CD4-positive, alpha-beta T cell (primary cell): ENCODE measurements at regions of chr3 and their contacts with region 1.

Region 1: DNA sequence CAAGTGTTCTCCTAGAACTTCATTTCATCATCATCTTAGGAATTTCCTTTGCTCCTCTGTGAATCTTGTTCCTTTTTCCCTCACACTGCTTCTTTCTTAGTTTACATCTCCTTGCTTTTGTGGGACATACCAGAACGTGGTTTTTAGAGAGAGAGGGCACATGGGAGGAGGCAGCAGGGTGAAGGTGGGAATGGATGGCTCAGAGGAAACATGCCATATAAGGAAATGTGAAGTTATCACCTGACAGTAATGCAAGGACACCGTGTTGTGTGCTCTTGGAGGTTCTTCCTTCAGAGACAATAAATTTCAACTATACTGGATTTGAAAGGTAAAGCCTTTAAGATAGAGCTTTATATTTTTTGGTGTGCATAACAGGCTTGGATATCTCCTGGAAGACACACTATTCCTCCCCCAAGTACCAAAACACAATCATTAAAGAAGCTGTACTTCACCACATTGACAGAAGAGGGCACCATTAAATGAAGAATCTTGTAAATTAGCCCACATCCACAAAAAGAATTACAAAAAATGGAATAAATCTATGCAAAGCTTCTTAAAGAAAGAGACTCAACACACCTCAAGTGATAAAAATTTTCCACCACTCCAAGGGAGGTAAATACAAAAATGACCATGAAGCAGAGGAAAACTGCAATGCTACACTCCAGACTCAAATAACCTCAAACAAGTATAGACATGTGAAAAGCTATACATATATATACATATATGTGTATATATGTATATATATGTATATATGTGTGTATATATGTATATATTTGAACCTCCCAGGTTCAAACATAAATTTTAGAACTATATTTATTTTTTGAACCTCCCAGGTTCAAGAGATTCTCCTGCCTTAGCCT is 26.1 kb downstream of the RPL39L start:
- DNase-seq: peak in 3 of 14 experiments; percentile 58 to 72 (median 68)
- ATAC-seq: peak; percentile 63
- H3K4me3 ChIP-seq: no peak overlapping the region
- H3K4me3 Mint-ChIP-seq: no peak overlapping the region
- H3K27ac ChIP-seq: no peak overlapping the region
- H3K27ac Mint-ChIP-seq: no peak overlapping the region
- H3K4me1 ChIP-seq: peaks cover 2% of the 10 kb centered on the region
- H3K4me1 Mint-ChIP-seq: peaks cover 8% of the 10 kb centered on the region
- H3K27me3 ChIP-seq: no peaks in the 10 kb centered on the region
- H3K27me3 Mint-ChIP-seq: no peaks in the 10 kb centered on the region
- CTCF ChIP-seq: peak; percentile 86

Region 2: GRCh38 chr3:187150599-187150998 is 37.4 kb after region 1 on chr3:
- CTCF ChIA-PET with region 1: interaction called, 52 read pairs
- POLR2A ChIA-PET with region 1: interaction called, 14 read pairs
- intact Hi-C with region 1: loop called in 1 of 2 experiments (anchors 2 kb)
- DNase-seq: peak; percentile 36 to 76 (median 60)
- ATAC-seq: peak; percentile 55
- H3K4me3 ChIP-seq: no peak overlapping the region
- H3K4me3 Mint-ChIP-seq: no peak overlapping the region
- H3K27ac ChIP-seq: no peak overlapping the region
- H3K27ac Mint-ChIP-seq: no peak overlapping the region
- H3K4me1 ChIP-seq: no peaks in the 10 kb centered on the region
- H3K4me1 Mint-ChIP-seq: peaks cover 8% of the 10 kb centered on the region
- H3K27me3 ChIP-seq: peaks cover 0 to 2% of the 10 kb centered on the region in 2 experiments
- H3K27me3 Mint-ChIP-seq: no peaks in the 10 kb centered on the region
- CTCF ChIP-seq: peak; percentile 34

Region 3: GRCh38 chr3:187164885-187165543 is 51.9 kb after region 1 on chr3:
- CTCF ChIA-PET with region 1: interaction called, 64 read pairs
- POLR2A ChIA-PET with region 1: interaction called, 19 read pairs
- intact Hi-C with region 1: loop called (anchors 1 kb)
- DNase-seq: peak in 10 of 14 experiments; percentile 3 to 84 (median 28)
- ATAC-seq: peak; percentile 81
- H3K4me3 ChIP-seq: no peak overlapping the region
- H3K4me3 Mint-ChIP-seq: no peak overlapping the region
- H3K27ac ChIP-seq: no peak overlapping the region
- H3K27ac Mint-ChIP-seq: no peak overlapping the region
- H3K4me1 ChIP-seq: peaks cover 5% of the 10 kb centered on the region
- H3K4me1 Mint-ChIP-seq: peaks cover 11% of the 10 kb centered on the region
- H3K27me3 ChIP-seq: no peaks in the 10 kb centered on the region
- H3K27me3 Mint-ChIP-seq: no peaks in the 10 kb centered on the region
- CTCF ChIP-seq: peak; percentile 82